Activated CD4-positive, alpha-beta T cell treated with anti-CD3 and anti-CD28 coated beads, Interleukin-2, amount 10 ng/mL, durations not matched to agents 24 days and 14 days (primary cell): ENCODE measurements at regions of chrX and their contacts with region 1.

Region 1: GRCh38 chrX:12771445-12772069 is 19.7 kb upstream of the PRPS2 start:
- DNase-seq: peak; percentile 91
- H3K4me3 Mint-ChIP-seq: peak overlapping the region; percentile 55
- H3K27ac Mint-ChIP-seq: no peak overlapping the region
- H3K4me1 Mint-ChIP-seq: peaks cover 7% of the 10 kb centered on the region
- H3K27me3 Mint-ChIP-seq: peaks cover 35% of the 10 kb centered on the region

Region 2: DNA sequence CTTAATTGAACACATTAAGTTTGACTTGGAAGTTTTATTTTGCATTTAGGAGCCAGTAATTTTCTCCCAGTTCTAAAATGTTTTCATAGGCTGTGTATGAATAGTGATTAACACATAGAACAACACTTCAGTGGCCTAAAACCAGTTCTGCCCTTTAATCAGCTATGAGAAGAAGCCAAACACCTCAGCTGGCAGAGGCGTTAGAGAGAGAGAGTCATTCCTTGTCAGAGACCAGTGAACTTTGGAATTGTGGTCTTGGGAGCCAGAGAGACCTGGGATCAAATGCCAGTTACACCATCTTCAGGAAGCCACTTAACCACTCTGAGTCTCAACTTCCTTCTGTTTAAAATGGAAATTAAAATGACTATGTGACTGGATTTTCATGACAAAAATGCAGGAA is 19.7 kb before region 1 on chrX:
- intact Hi-C with region 1: no loop called
- DNase-seq: no peak
- H3K4me3 Mint-ChIP-seq: no peak overlapping the region
- H3K27ac Mint-ChIP-seq: no peak overlapping the region
- H3K4me1 Mint-ChIP-seq: peaks cover under 1% of the 10 kb centered on the region
- H3K27me3 Mint-ChIP-seq: peaks cover 2% of the 10 kb centered on the region

Region 3: DNA sequence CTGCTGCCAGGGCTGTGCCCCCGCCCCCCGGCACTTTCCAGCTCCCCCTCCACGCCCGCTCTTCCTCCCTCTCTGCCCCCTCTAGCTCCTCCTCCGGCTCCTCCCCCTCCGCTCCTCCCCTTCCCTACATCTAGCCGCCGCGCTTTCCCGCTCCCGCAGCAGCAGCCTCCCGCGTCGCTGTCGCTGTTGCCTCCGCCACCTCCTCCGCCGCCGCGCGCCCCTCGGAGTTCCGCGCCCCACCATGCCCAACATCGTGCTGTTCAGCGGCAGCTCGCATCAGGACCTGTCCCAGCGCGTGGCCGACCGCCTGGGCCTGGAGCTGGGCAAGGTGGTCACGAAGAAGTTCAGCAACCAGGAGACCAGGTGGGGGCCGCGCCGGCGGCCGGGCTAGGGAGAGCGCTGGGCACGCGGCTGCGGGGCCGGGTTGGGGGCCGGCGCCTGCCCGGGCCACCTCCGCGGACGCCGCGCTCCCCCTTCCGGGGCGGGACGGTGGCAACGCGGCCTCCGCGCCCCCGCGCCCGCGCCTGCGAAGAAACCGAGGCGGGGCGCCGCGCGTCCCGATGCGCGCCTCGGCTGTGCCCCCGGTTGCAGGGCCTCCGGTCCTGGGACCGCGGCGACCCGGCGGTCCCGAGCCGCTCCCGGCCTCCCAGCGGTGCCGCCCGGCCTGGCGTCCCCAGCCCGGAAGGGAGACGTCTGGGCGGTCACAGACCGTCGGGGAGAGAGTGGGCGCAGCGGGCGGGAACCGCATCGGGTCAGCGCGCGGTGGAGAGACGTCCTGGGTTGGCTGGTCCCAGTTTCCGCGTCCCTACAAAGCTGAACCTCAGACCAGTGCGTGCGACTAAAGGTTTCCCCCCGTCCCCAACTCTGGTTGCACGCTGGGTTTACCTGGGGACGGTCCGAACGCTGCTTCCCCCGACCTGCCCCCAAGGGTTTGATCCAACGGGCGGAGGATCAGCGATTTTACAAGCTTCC is 20.0 kb after region 1 on chrX and contains the start of gene PRPS2:
- intact Hi-C with region 1: loop called (anchors 1 kb)
- DNase-seq: peak; percentile 92
- H3K4me3 Mint-ChIP-seq: peak within 1 kb of the TSS; percentile 87
- H3K27ac Mint-ChIP-seq: peak within 1 kb of the TSS; percentile 85
- H3K4me1 Mint-ChIP-seq: peaks cover 34% of the 10 kb centered on the region
- H3K27me3 Mint-ChIP-seq: peaks cover 8% of the 10 kb centered on the region
- total RNA-seq, gene PRPS2: 111 and 115 TPM in 2 replicates

Region 4: GRCh38 chrX:12894074-12895030 is 122.8 kb after region 1 on chrX:
- intact Hi-C with region 1: loop called (anchors 5 kb)
- DNase-seq: peak; percentile 84
- H3K4me3 Mint-ChIP-seq: no peak overlapping the region
- H3K27ac Mint-ChIP-seq: peak overlapping the region; percentile 3
- H3K4me1 Mint-ChIP-seq: peaks cover 46% of the 10 kb centered on the region
- H3K27me3 Mint-ChIP-seq: no peaks in the 10 kb centered on the region